Activated naive CD4-positive, alpha-beta T cell treated with anti-CD3 and anti-CD28 coated beads, Interleukin-2, amount 10 ng/mL, durations not matched to agents 7 days and 5 days (primary cell): ENCODE measurements at regions of chr2 and their contacts with region 1.

Region 1: GRCh38 chr2:68751397-68752339 is 17.1 kb downstream of the ARHGAP25 start:
- DNase-seq: peak; percentile 95
- H3K4me3 Mint-ChIP-seq: no peak overlapping the region
- H3K27ac Mint-ChIP-seq: peak overlapping the region; percentile 74
- H3K4me1 Mint-ChIP-seq: peaks cover 92% of the 10 kb centered on the region
- H3K27me3 Mint-ChIP-seq: no peaks in the 10 kb centered on the region

Region 2: GRCh38 chr2:68709421-68709911 is 42.2 kb before region 1 on chr2:
- CTCF ChIA-PET with region 1: interaction called, 54 read pairs
- DNase-seq: no peak
- H3K4me3 Mint-ChIP-seq: no peak overlapping the region
- H3K27ac Mint-ChIP-seq: no peak overlapping the region
- H3K4me1 Mint-ChIP-seq: peaks cover 32% of the 10 kb centered on the region
- H3K27me3 Mint-ChIP-seq: no peaks in the 10 kb centered on the region

Region 3: GRCh38 chr2:68734688-68735525 is 16.8 kb before region 1 on chr2 and contains the start of gene ARHGAP25:
- CTCF ChIA-PET with region 1: interaction called, 82 read pairs
- DNase-seq: peak; percentile 77
- H3K4me3 Mint-ChIP-seq: no peak within 1 kb of the TSS
- H3K27ac Mint-ChIP-seq: no peak within 1 kb of the TSS
- H3K4me1 Mint-ChIP-seq: peaks cover 41% of the 10 kb centered on the region
- H3K27me3 Mint-ChIP-seq: no peaks in the 10 kb centered on the region

Region 4: GRCh38 chr2:68774569-68775271 is 23.1 kb after region 1 on chr2:
- CTCF ChIA-PET with region 1: interaction called, 37 read pairs
- DNase-seq: peak; percentile 66
- H3K4me3 Mint-ChIP-seq: peak overlapping the region; percentile 72
- H3K27ac Mint-ChIP-seq: peak overlapping the region; percentile 91
- H3K4me1 Mint-ChIP-seq: peaks cover 89% of the 10 kb centered on the region
- H3K27me3 Mint-ChIP-seq: no peaks in the 10 kb centered on the region

Region 5: DNA sequence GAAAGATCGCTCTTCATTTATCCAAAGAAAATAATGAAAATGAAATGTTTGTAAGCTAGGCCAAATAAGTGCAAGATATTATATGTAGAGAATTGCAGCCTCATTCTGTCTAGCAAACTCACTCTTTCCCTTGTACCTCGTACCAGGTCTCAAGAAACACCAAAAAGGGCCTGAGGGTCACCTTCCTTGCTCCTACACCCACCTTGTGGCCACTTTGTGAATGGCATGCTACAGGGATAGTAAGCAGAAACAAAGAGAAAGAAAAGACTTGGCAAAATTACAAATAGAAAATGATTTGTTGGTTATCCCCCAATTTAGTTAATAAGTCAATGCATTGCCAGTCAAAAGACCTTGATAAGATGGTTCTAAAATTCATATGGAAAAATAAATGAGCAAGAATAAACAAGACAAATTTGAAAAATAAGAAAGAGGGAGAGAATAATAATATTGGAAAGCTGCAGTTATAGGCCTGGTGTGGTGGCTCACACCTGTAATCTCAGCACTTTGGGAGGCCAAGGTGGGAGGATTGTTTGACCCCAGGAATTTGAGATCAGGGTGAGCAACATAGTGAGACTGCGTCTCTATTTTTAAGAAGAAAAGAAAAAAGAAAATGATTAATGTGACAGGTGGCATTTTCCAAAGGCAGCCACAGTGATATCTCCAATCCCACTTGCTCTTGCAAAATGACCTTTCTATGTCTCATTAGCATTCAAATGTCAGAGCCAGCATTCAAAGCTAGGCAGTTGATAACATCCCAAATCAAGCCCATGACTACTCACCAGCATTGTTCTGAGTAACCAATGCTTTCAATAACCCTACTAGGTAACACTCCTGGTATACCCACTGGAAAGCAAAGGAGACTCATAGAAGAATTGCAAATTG is 158.4 kb after region 1 on chr2:
- CTCF ChIA-PET with region 1: interaction called, 38 read pairs
- DNase-seq: peak; percentile 79
- H3K4me3 Mint-ChIP-seq: no peak overlapping the region
- H3K27ac Mint-ChIP-seq: peak overlapping the region; percentile 53
- H3K4me1 Mint-ChIP-seq: peaks cover 40% of the 10 kb centered on the region
- H3K27me3 Mint-ChIP-seq: no peaks in the 10 kb centered on the region